ENCODE measurements at regions of chr11 and their contacts with region 1.

Region 1: DNA sequence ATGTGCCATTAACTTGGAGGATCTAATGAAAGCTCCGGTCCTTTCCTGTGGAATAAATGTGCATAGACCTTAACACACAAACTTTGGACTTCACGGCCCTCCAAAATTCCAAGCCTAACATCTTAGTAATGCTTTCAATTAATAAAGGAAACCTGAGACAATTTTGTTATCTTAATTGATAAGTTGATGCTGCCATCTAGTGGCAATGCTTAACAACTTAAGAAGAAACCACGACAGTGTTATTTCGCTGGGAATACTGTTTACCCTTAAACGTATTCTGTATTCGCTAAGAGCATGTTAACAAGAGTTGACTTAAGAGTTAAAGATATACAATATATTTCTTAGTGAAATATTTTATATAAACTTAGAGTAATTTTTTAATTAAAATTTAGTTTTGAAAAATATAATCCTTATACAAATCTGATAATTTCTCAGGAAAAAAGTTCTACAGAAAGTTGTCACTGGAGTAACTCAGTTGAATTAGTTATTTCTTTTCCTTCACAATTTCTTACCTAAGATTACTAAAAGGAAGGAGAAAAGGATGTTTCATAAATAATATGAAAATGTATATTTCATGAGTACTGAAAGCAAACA is 35.0 kb upstream of the OR9G4 start:
- DNase-seq: no peak
- ATAC-seq: no peak

Region 2: DNA sequence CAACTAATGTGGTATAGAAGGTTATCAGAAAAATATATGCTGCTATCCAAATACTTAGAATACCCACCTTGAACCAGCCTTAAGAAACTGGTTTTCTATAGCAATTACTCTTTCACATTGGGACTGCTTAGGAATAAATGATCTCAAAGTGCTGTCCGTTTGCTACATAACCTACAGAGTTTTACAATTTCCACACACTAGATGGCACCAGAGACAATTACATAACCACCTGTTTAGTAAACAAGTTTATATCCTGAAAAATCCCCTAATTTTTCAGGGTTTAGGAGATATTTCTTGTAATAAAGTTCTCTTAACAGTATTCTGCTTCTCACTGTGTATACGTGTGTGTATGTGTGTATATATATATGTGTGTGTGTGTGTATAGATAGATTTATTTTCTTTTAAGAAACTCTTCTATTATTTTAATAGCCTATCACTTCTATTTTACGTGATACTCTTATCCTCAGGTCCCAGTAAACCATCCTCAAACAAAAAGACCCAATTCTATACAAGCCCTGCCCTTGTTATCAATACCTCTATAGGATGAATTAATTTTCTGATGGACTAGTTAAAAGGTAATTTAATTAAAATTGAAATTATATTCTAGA is 840.7 kb before region 1 on chr11:
- intact Hi-C with region 1: loop called (anchors 10 kb)
- DNase-seq: no peak
- ATAC-seq: no peak

Region 3: GRCh38 chr11:56624661-56625110 is 158.9 kb before region 1 on chr11:
- intact Hi-C with region 1: loop called (anchors 10 kb)
- DNase-seq: no peak
- ATAC-seq: no peak